Endothelial cell of umbilical vein (primary cell): ENCODE measurements at regions of chr15 and their contacts with region 1.

Region 1: GRCh38 chr15:89802231-89802928 is 12.3 kb downstream of the ANPEP start:
- DNase-seq: peak; percentile 66
- H3K4me3 ChIP-seq: no peak overlapping the region
- H3K27ac ChIP-seq: peak overlapping the region; percentile 65
- H3K4me1 ChIP-seq: peaks cover 17% of the 10 kb centered on the region
- H3K27me3 ChIP-seq: no peaks in the 10 kb centered on the region
- CTCF ChIP-seq: no peak
- POLR2A ChIP-seq: peak; percentile 56

Region 2: GRCh38 chr15:89776274-89777072 is 25.9 kb before region 1 on chr15 and contains the start of gene MESP2:
- CTCF ChIA-PET with region 1: no interaction called
- POLR2A ChIA-PET with region 1: no interaction called
- dilution Hi-C with region 1: no loop called
- intact Hi-C with region 1: loop called (anchors 2 kb)
- DNase-seq: peak; percentile 88
- H3K4me3 ChIP-seq: peak within 1 kb of the TSS in 2 of 3 experiments; percentile 4 to 30
- H3K27ac ChIP-seq: no peak within 1 kb of the TSS
- H3K4me1 ChIP-seq: peaks cover 6% of the 10 kb centered on the region
- H3K27me3 ChIP-seq: no peaks in the 10 kb centered on the region
- CTCF ChIP-seq: peak; percentile 55 to 73
- POLR2A ChIP-seq: no peak
- total RNA-seq, gene MESP2: 0.42 TPM in 1 of 2 replicates, not detected in the other

Region 3: DNA sequence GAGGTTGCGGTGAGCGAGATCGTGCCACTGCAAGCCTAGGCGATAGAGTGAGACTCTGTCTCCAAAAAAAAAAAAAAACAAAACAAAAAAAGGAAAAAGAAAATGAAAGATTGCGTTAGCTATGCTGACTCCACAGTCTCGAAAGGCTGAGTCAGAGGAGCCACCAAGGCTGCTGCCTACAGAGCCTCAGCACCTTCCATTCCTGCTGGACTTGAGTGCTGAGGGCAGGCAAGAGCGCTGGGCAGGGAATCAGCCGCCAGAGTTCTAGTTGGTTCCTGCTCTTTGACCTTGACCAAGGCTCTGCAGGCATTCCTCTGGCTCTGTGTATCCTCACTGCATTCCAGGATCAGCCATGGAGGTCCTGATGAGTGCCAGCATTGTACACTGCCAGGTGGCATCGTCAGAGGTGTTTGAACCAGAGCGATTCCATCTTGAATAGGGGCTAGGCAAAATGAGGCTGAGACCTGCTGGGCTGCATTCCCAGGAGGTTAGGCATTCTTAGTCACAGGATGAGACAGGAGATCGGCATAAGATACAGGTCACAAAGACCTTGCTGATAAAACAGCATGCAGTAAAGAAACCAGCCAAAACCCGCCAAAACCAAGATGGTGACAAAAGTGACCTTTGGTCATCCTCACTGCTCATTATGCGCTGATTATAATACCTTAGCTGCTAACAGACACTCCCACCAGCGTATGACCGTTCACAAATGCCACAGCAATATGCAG is 20.3 kb before region 1 on chr15:
- CTCF ChIA-PET with region 1: no interaction called
- POLR2A ChIA-PET with region 1: interaction called, 3 read pairs
- dilution Hi-C with region 1: no loop called
- intact Hi-C with region 1: loop called (anchors 1 kb)
- DNase-seq: no peak
- H3K4me3 ChIP-seq: no peak overlapping the region
- H3K27ac ChIP-seq: no peak overlapping the region
- H3K4me1 ChIP-seq: peaks cover 4% of the 10 kb centered on the region
- H3K27me3 ChIP-seq: no peaks in the 10 kb centered on the region
- CTCF ChIP-seq: no peak
- POLR2A ChIP-seq: no peak

Region 4: GRCh38 chr15:89926158-89926557 is 123.8 kb after region 1 on chr15:
- CTCF ChIA-PET with region 1: no interaction called
- POLR2A ChIA-PET with region 1: no interaction called
- dilution Hi-C with region 1: no loop called
- intact Hi-C with region 1: no loop called
- DNase-seq: no peak
- H3K4me3 ChIP-seq: no peak overlapping the region
- H3K27ac ChIP-seq: no peak overlapping the region
- H3K4me1 ChIP-seq: no peaks in the 10 kb centered on the region
- H3K27me3 ChIP-seq: peaks cover 0 to 3% of the 10 kb centered on the region in 2 experiments
- CTCF ChIP-seq: no peak
- POLR2A ChIP-seq: no peak

Region 5: DNA sequence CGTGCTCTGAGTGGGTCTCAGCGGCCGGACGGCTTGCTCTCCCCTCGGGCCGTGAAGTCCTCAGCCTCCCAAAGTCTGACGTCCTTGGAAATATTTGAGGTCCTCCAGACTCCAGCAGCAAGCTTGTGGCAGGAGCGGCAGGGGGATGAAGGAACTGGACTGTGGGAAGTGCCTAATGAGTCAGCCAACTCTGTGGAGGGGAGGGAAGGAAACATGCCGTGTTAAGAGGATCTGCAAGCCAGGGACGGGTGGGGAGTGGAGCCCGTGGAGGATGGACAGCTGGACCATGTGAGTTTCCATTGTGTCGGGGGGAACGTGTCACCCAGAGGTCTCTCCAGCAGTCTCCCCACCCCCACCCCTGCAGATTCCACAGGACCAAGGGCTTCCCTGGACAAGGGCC is 339.3 kb after region 1 on chr15:
- CTCF ChIA-PET with region 1: no interaction called
- POLR2A ChIA-PET with region 1: no interaction called
- dilution Hi-C with region 1: no loop called
- intact Hi-C with region 1: no loop called
- DNase-seq: peak; percentile 45
- H3K4me3 ChIP-seq: no peak overlapping the region
- H3K27ac ChIP-seq: no peak overlapping the region
- H3K4me1 ChIP-seq: peaks cover 2% of the 10 kb centered on the region
- H3K27me3 ChIP-seq: no peaks in the 10 kb centered on the region
- CTCF ChIP-seq: no peak
- POLR2A ChIP-seq: no peak